Spleen (tissue), 13 donors: ENCODE measurements at regions of chr15 and their contacts with region 1.

Region 1: GRCh38 chr15:47987908-47988532 is 132.8 kb upstream of the SLC24A5 start:
- DNase-seq: no peak
- H3K4me3 ChIP-seq: no peak overlapping the region
- H3K27ac ChIP-seq: no peak overlapping the region
- H3K4me1 ChIP-seq: peaks cover 0 to 10% (median 0%) of the 10 kb centered on the region in 6 donors
- H3K27me3 ChIP-seq: no peaks in the 10 kb centered on the region
- CTCF ChIP-seq: peak; percentile 19 to 67 (median 49)
- POLR2A ChIP-seq: no peak

Region 2: GRCh38 chr15:47196057-47196456 is 792.0 kb before region 1 on chr15:
- intact Hi-C with region 1: loop called (anchors 2 kb)
- DNase-seq: peak; percentile 82
- H3K4me3 ChIP-seq: no peak overlapping the region
- H3K27ac ChIP-seq: no peak overlapping the region
- H3K4me1 ChIP-seq: peaks cover 0 to 6% (median 0%) of the 10 kb centered on the region in 6 donors
- H3K27me3 ChIP-seq: no peaks in the 10 kb centered on the region
- CTCF ChIP-seq: peak; percentile 25 to 84 (median 62)
- POLR2A ChIP-seq: no peak

Region 3: GRCh38 chr15:47473832-47474231 is 514.2 kb before region 1 on chr15:
- intact Hi-C with region 1: loop called (anchors 10 kb)
- DNase-seq: no peak
- H3K4me3 ChIP-seq: no peak overlapping the region
- H3K27ac ChIP-seq: peak overlapping the region in 5 of 8 donors; percentile 17 to 42 (median 28)
- H3K4me1 ChIP-seq: peaks cover 0 to 7% (median 2%) of the 10 kb centered on the region in 6 donors
- H3K27me3 ChIP-seq: no peaks in the 10 kb centered on the region
- CTCF ChIP-seq: no peak
- POLR2A ChIP-seq: no peak

Region 4: GRCh38 chr15:47717036-47717611 is 270.9 kb before region 1 on chr15 and contains the start of gene SEMA6D:
- intact Hi-C with region 1: loop called (anchors 10 kb)
- DNase-seq: peak; percentile 77
- H3K4me3 ChIP-seq: peak within 1 kb of the TSS; percentile 30 to 74 (median 57)
- H3K27ac ChIP-seq: peak within 1 kb of the TSS; percentile 19 to 79 (median 62)
- H3K4me1 ChIP-seq: peaks cover 0 to 33% (median 13%) of the 10 kb centered on the region in 6 donors
- H3K27me3 ChIP-seq: peaks cover 0 to 74% (median 15%) of the 10 kb centered on the region in 7 donors
- CTCF ChIP-seq: peak in 5 of 11 experiments; percentile 12 to 55 (median 37)
- POLR2A ChIP-seq: no peak
- total RNA-seq, gene SEMA6D: 1.3 to 6.5 (median 2.6) TPM